Right lobe of liver (tissue), 6 donors: ENCODE measurements at regions of chr16 and their contacts with region 1.

Region 1: DNA sequence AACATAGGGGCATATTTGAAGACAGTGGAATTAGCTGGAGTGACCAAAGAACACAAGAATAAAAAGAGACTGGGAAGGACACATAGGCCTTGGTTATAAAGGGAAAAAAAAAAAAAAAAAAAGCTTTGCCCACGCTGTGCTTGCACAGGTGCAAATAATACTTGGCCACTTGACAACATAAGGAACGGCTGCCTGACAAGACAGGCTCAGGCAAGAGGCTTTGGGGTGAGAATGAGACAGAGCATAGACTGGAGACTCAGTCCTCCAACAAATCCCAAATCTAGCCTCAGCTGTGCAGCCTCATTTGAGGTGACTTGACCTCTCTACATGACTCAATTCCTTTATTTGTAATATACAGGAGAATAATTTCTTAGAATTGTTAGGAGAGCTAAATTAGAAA is 332.8 kb upstream of the DYNLRB2 start:
- DNase-seq: no peak
- ATAC-seq: no peak
- H3K4me3 ChIP-seq: no peak overlapping the region
- H3K27ac ChIP-seq: no peak overlapping the region
- H3K4me1 ChIP-seq: no peaks in the 10 kb centered on the region
- H3K27me3 ChIP-seq: no peaks in the 10 kb centered on the region
- CTCF ChIP-seq: no peak
- POLR2A ChIP-seq: no peak

Region 2: GRCh38 chr16:80144191-80144590 is 63.8 kb before region 1 on chr16:
- intact Hi-C with region 1: loop called in 1 of 2 experiments (anchors 10 kb)
- DNase-seq: no peak
- ATAC-seq: no peak
- H3K4me3 ChIP-seq: no peak overlapping the region
- H3K27ac ChIP-seq: no peak overlapping the region
- H3K4me1 ChIP-seq: no peaks in the 10 kb centered on the region
- H3K27me3 ChIP-seq: no peaks in the 10 kb centered on the region
- CTCF ChIP-seq: no peak
- POLR2A ChIP-seq: no peak

Region 3: GRCh38 chr16:80317599-80318037 is 109.6 kb after region 1 on chr16:
- intact Hi-C with region 1: no loop called
- DNase-seq: no peak
- ATAC-seq: no peak
- H3K4me3 ChIP-seq: no peak overlapping the region
- H3K27ac ChIP-seq: no peak overlapping the region
- H3K4me1 ChIP-seq: no peaks in the 10 kb centered on the region
- H3K27me3 ChIP-seq: no peaks in the 10 kb centered on the region
- CTCF ChIP-seq: peak in 1 of 4 donors; percentile 17
- POLR2A ChIP-seq: no peak

Region 4: GRCh38 chr16:80862160-80862705 is 654.2 kb after region 1 on chr16:
- intact Hi-C with region 1: no loop called
- DNase-seq: no peak
- ATAC-seq: no peak
- H3K4me3 ChIP-seq: no peak overlapping the region
- H3K27ac ChIP-seq: no peak overlapping the region
- H3K4me1 ChIP-seq: no peaks in the 10 kb centered on the region
- H3K27me3 ChIP-seq: no peaks in the 10 kb centered on the region
- CTCF ChIP-seq: no peak
- POLR2A ChIP-seq: no peak